HepG2 (cell line): ENCODE measurements at regions of chr1 and their contacts with region 1.

Region 1: DNA sequence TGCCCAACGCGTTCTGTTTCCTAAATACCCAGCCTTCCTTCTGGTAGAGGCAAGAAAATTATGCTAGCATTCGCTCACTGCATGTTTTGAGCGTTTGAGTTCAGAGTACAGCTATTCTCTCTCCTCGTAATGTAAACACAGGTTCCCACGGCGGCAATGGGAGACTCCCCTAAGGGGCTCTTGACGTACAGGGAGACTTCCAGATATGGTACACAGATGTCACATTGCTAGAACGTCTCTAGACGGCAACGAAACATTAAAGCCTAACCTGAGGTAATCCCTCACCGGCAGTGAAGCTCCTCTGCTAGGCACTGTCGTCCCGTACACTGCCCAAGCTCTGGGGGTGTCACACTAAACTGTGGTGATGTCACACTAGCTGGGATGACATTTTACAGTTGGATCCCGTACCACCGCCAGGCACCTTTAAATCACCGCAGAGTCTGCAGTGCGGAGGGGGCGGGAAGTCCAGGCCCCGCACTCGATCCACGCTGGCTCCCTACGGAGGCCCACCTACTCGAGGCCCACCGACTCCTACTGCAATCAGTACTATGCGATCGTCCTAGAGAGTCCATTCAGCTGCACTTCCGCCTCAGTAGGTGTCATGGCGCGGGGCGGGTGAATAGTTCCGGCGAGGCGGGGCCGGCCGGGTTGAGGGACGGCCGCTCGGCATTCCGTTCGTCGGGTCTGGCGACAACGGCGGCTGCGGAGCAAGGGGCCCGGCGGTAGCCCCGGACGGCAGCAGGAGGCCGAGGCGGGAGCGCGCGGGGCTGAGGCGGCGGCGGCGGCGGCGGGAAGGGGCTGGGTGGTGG is at the start of gene HIPK1:
- DNase-seq: peak; percentile 86
- ATAC-seq: peak; percentile 80
- H3K4me3 ChIP-seq: peak within 1 kb of the TSS; percentile 90 to 99 (median 99)
- H3K27ac ChIP-seq: peak within 1 kb of the TSS; percentile 99
- H3K4me1 ChIP-seq: peaks cover 54% of the 10 kb centered on the region
- H3K27me3 ChIP-seq: no peaks in the 10 kb centered on the region; a peak in 1 of 5 replicates
- CTCF ChIP-seq: no peak
- EP300 ChIP-seq: peak in 1 of 2 experiments; percentile 32; a peak in 2 of 4 replicates
- POLR2A ChIP-seq: peak; percentile 71 to 84
- RAD21 ChIP-seq: no peak
- total RNA-seq, gene HIPK1: 20.8 and 28.9 TPM in 2 replicates

Region 2: DNA sequence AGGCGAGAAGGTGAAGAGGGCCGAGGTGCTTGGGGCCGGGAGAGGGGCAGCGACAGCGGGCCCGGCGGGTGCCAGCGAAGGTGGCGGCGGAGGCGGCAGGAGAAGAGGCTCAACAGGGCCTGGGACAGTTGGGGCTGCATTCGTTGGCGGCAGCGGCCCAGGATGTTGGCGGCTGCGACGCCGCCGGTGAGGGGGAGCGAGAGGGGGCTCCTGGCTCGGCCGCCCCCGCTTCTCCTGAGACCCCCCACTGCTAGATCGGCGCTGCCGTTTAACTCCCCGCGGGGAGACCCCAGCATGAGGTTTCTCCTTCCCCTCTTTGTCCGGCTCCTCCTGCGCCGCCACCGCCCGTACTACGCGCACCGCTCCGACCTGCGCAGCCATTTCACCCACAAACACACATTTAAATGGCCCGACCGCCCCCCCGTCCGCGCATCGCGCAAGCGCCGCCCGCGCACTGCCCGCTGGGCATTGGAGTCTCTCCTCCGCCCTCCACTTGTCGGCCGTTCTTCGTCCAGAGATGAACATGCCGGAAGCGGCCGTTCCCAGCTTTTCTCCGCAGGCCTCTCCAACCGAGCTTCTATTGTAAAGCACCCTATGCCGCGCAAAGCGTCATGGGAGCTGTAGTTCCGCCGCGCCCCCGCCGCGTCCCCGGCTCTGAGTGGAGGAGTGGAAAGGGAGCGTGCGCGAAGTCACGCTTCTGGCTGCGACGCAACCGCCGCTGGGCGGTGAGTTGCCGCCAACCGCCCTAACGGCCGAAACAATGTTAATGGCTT is 117.1 kb before region 1 on chr1 and contains the start of gene RSBN1:
- CTCF ChIA-PET with region 1: no interaction called
- POLR2A ChIA-PET with region 1: interaction called, 27 read pairs
- in situ Hi-C with region 1: no loop called
- intact Hi-C with region 1: no loop called
- DNase-seq: peak; percentile 97
- ATAC-seq: peak; percentile 98
- H3K4me3 ChIP-seq: peak within 1 kb of the TSS; percentile 76 to 99 (median 88)
- H3K27ac ChIP-seq: peak within 1 kb of the TSS; percentile 83
- H3K4me1 ChIP-seq: peaks cover 28% of the 10 kb centered on the region
- H3K27me3 ChIP-seq: no peaks in the 10 kb centered on the region; a peak in 1 of 5 replicates
- CTCF ChIP-seq: no peak; the same call in 1 of the 2 replicates
- EP300 ChIP-seq: 0 out of 4 replicates have a peak, but pooled peaks of 1 of the 2 experiments have one; percentile 5
- POLR2A ChIP-seq: peak; percentile 68 to 69
- RAD21 ChIP-seq: no peak
- total RNA-seq, gene RSBN1: 10.4 and 13.6 TPM in 2 replicates

Region 3: GRCh38 chr1:113891631-113892220 is 37.4 kb before region 1 on chr1:
- CTCF ChIA-PET with region 1: no interaction called
- POLR2A ChIA-PET with region 1: no interaction called
- in situ Hi-C with region 1: no loop called
- intact Hi-C with region 1: no loop called
- DNase-seq: no peak
- ATAC-seq: no peak
- H3K4me3 ChIP-seq: no peak overlapping the region
- H3K27ac ChIP-seq: no peak overlapping the region
- H3K4me1 ChIP-seq: no peaks in the 10 kb centered on the region
- H3K27me3 ChIP-seq: no peaks in the 10 kb centered on the region
- CTCF ChIP-seq: no peak
- EP300 ChIP-seq: no peak
- POLR2A ChIP-seq: no peak
- RAD21 ChIP-seq: no peak

Region 4: GRCh38 chr1:113904674-113905434 is 24.3 kb before region 1 on chr1 and contains the starts of genes AP4B1 and DCLRE1B:
- CTCF ChIA-PET with region 1: interaction called, 3 read pairs
- POLR2A ChIA-PET with region 1: interaction called, 102 read pairs
- in situ Hi-C with region 1: no loop called
- intact Hi-C with region 1: loop called (anchors 1 kb)
- DNase-seq: peak; percentile 99
- ATAC-seq: peak; percentile 95
- H3K4me3 ChIP-seq: peak within 1 kb of the TSS; percentile 81 to 90 (median 88)
- H3K27ac ChIP-seq: peak within 1 kb of the TSS; percentile 78
- H3K4me1 ChIP-seq: peaks cover 24% of the 10 kb centered on the region; the same call in 1 of the 2 replicates
- H3K27me3 ChIP-seq: no peaks in the 10 kb centered on the region; a peak in 1 of 5 replicates
- CTCF ChIP-seq: peak; percentile 94
- EP300 ChIP-seq: peak; percentile 5 to 39; a peak in 2 of 4 replicates
- POLR2A ChIP-seq: peak; percentile 76 to 77
- RAD21 ChIP-seq: peak; percentile 90
- total RNA-seq, gene AP4B1: 9.7 and 12.0 TPM in 2 replicates
- total RNA-seq, gene DCLRE1B: 8.0 and 11.5 TPM in 2 replicates

Region 5: GRCh38 chr1:113940365-113941244 is 11.5 kb after region 1 on chr1:
- CTCF ChIA-PET with region 1: no interaction called
- POLR2A ChIA-PET with region 1: interaction called, 10 read pairs
- in situ Hi-C with region 1: no loop called
- intact Hi-C with region 1: no loop called
- DNase-seq: no peak
- ATAC-seq: no peak
- H3K4me3 ChIP-seq: no peak overlapping the region
- H3K27ac ChIP-seq: no peak overlapping the region
- H3K4me1 ChIP-seq: peaks cover 33% of the 10 kb centered on the region
- H3K27me3 ChIP-seq: no peaks in the 10 kb centered on the region
- CTCF ChIP-seq: no peak
- EP300 ChIP-seq: no peak
- POLR2A ChIP-seq: no peak
- RAD21 ChIP-seq: no peak